Activated CD4-positive, alpha-beta T cell treated with anti-CD3 and anti-CD28 coated beads for 36 hours (primary cell): ENCODE measurements at regions of chr19 and their contacts with region 1.

Region 1: GRCh38 chr19:53365134-53365898 is at the start of gene ZNF525:
- DNase-seq: peak; percentile 98
- ATAC-seq: peak; percentile 100
- H3K4me3 Mint-ChIP-seq: peak within 1 kb of the TSS; percentile 93
- H3K27ac Mint-ChIP-seq: peak within 1 kb of the TSS; percentile 95
- H3K4me1 Mint-ChIP-seq: peaks cover 26% of the 10 kb centered on the region
- H3K27me3 Mint-ChIP-seq: no peaks in the 10 kb centered on the region
- total RNA-seq, gene ZNF525: 21.5 to 27.8 TPM

Region 2: GRCh38 chr19:52535771-52536447 is 829.4 kb before region 1 on chr19:
- CTCF ChIA-PET with region 1: no interaction called
- POLR2A ChIA-PET with region 1: no interaction called
- intact Hi-C with region 1: loop called in 1 of 2 experiments (anchors 1 kb)
- DNase-seq: peak; percentile 97
- ATAC-seq: peak; percentile 94
- H3K4me3 Mint-ChIP-seq: peak overlapping the region; percentile 83
- H3K27ac Mint-ChIP-seq: peak overlapping the region; percentile 94
- H3K4me1 Mint-ChIP-seq: peaks cover 28% of the 10 kb centered on the region
- H3K27me3 Mint-ChIP-seq: no peaks in the 10 kb centered on the region

Region 3: DNA sequence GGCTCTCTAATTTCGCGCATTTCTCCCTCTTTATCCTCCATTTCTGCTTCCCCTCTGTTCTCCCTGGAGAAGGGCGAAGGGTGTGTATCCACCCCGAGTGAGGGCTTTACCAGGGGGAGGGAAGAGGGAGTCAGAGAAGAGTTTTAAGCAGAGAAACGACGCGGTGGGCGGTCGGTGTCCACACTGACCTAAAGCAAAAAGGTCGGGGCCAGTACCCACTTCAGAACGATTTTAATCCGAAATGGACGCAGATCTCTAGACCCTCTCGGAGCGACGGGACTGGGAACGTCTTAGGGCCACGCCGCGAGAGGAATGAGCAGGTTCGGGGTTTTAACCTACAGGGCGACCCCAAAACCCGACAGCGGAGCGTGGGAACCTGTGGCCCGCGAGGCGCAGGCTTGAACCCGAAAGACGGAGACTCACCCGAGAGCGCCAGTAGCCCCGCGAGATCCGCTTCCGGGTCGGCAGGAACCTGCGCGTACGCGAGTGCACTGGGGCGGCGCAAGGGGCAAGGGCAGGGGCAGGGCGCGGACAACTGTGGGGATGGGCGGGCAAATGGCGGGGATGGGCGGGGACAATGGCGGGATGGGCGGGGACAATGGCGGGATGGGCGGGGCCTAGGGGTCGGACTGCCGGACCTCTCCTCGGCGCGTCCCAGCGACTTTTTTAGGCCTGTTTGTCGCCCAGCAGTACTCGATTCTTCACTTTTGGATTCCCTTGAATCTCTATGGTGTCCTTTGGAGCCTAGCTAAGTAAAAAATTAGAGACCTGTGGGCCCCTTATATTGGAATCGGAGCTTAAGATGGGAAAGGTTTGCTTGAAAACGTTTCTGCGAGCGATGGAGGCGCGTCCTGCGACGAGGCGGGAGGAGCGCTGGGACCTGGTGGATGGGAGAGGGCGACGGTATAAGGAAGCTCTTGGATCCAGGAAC is 110.6 kb before region 1 on chr19 and contains the start of gene ZNF677:
- CTCF ChIA-PET with region 1: no interaction called
- POLR2A ChIA-PET with region 1: interaction called, 3 read pairs
- intact Hi-C with region 1: loop called in 1 of 2 experiments (anchors 1 kb)
- DNase-seq: peak; percentile 92
- ATAC-seq: peak; percentile 100
- H3K4me3 Mint-ChIP-seq: peak within 1 kb of the TSS; percentile 84
- H3K27ac Mint-ChIP-seq: peak within 1 kb of the TSS; percentile 53
- H3K4me1 Mint-ChIP-seq: peaks cover 10% of the 10 kb centered on the region
- H3K27me3 Mint-ChIP-seq: no peaks in the 10 kb centered on the region
- total RNA-seq, gene ZNF677: 6.4 to 7.5 TPM

Region 4: GRCh38 chr19:53271955-53272443 is 93.3 kb before region 1 on chr19:
- CTCF ChIA-PET with region 1: no interaction called
- POLR2A ChIA-PET with region 1: no interaction called
- intact Hi-C with region 1: no loop called
- DNase-seq: no peak
- ATAC-seq: no peak
- H3K4me3 Mint-ChIP-seq: no peak overlapping the region
- H3K27ac Mint-ChIP-seq: no peak overlapping the region
- H3K4me1 Mint-ChIP-seq: no peaks in the 10 kb centered on the region
- H3K27me3 Mint-ChIP-seq: peaks cover 8% of the 10 kb centered on the region

Region 5: GRCh38 chr19:53308339-53308811 is 56.9 kb before region 1 on chr19:
- CTCF ChIA-PET with region 1: no interaction called
- POLR2A ChIA-PET with region 1: no interaction called
- intact Hi-C with region 1: no loop called
- DNase-seq: peak; percentile 50
- ATAC-seq: no peak
- H3K4me3 Mint-ChIP-seq: no peak overlapping the region
- H3K27ac Mint-ChIP-seq: no peak overlapping the region
- H3K4me1 Mint-ChIP-seq: no peaks in the 10 kb centered on the region
- H3K27me3 Mint-ChIP-seq: peaks cover 18% of the 10 kb centered on the region

Region 6: GRCh38 chr19:53381379-53381778 is 16.1 kb after region 1 on chr19:
- CTCF ChIA-PET with region 1: no interaction called
- POLR2A ChIA-PET with region 1: interaction called, 16 read pairs
- intact Hi-C with region 1: no loop called
- DNase-seq: no peak
- ATAC-seq: peak; percentile 9
- H3K4me3 Mint-ChIP-seq: no peak overlapping the region
- H3K27ac Mint-ChIP-seq: no peak overlapping the region
- H3K4me1 Mint-ChIP-seq: no peaks in the 10 kb centered on the region
- H3K27me3 Mint-ChIP-seq: no peaks in the 10 kb centered on the region

Region 7: GRCh38 chr19:53431399-53432087 is 66.2 kb after region 1 on chr19 and contains the start of gene ZNF761:
- CTCF ChIA-PET with region 1: no interaction called
- POLR2A ChIA-PET with region 1: no interaction called
- intact Hi-C with region 1: loop called in 1 of 2 experiments (anchors 1 kb)
- DNase-seq: peak; percentile 98
- ATAC-seq: peak; percentile 99
- H3K4me3 Mint-ChIP-seq: peak within 1 kb of the TSS; percentile 94
- H3K27ac Mint-ChIP-seq: peak within 1 kb of the TSS; percentile 83
- H3K4me1 Mint-ChIP-seq: peaks cover 26% of the 10 kb centered on the region
- H3K27me3 Mint-ChIP-seq: no peaks in the 10 kb centered on the region
- total RNA-seq, gene ZNF761: 10.5 to 11.4 TPM

Region 8: DNA sequence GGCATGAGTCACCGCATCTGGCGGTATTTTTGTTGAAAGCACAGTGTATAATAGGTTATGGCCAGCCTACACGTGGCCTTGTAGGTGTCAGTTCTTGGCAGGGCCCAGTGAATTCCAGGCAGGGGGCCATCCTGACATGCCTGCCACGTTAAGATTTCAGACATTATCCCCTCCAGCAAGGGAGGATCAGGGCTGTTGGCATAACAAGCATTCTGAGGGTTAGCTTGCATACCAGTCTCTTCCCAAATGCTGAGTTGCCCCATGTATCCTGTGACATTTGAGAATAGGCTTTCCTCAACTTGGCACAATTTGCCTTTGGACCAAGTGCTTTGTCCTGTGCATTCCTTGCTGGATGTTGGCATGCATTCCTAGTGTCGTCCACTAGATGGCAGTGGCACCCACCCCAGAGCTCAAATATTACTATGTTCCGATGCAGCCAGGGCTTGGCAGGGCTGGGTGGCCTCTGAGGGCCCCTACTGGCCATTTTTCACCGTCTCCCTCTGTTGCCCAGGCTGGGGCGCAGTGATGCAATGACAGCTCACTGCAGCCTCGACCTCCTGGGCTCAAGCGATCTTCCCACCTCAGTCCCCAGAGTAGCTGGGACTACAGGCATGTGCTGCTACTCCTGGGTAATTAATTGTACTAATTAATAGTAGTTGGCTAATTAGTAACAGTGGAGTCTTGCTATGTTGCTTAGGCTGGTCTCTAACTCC is 427.6 kb after region 1 on chr19:
- CTCF ChIA-PET with region 1: no interaction called
- POLR2A ChIA-PET with region 1: no interaction called
- intact Hi-C with region 1: no loop called
- DNase-seq: peak; percentile 88
- ATAC-seq: peak; percentile 100
- H3K4me3 Mint-ChIP-seq: no peak overlapping the region
- H3K27ac Mint-ChIP-seq: no peak overlapping the region
- H3K4me1 Mint-ChIP-seq: no peaks in the 10 kb centered on the region
- H3K27me3 Mint-ChIP-seq: peaks cover 2% of the 10 kb centered on the region